ENCODE measurements at regions of chr18 and their contacts with region 1.

Region 1: DNA sequence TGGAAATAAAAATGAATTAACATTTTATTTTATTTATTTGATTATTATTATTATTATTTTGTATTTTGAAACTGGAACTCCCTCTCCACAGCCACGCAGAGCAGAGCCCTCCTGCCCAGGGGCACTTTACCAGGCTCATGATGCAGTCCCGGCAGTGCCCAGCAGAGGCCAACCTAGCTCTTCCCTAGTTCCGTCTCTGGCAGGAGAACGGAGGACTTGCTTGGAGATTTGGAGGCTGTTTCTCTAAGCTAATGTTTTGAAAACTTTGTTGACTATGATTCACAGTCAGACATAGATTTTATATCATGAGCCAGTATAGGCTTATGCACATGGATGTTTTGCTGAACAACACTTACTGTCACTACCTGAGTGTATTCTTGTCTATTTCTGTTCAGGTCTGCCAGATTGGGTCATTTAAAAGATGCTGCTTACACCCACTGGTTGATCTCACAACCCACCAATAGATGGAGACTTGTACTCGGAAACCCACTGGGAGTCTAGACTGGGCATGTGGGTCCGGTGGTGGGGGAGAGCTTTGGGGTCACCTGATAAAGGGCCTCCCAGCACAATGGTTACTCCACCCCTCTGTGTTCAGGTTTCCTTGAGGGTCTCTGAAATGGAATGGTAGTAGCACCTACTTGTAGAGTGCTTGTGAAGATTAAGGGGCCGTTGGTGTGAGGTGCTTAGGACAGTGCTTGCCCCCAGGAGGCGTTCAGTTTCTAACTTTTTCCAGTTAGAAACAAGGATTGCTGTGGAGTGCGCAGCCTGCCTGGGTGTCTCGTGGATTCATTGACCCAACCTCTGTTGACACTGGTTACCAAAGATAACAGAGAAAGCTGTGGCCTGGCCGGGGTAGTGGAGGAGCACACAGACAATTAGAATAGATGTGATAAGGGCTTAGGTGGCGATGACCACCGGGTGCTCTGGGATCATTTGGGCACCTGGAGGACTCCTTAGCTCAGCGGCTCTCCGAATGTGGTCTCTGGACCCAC is 177.3 kb downstream of the HAUS1 start:
- DNase-seq: peak; percentile 83
- H3K4me3 ChIP-seq: no peak overlapping the region
- H3K27ac ChIP-seq: no peak overlapping the region
- H3K4me1 ChIP-seq: peaks cover 28% of the 10 kb centered on the region
- H3K27me3 ChIP-seq: no peaks in the 10 kb centered on the region
- CTCF ChIP-seq: peak; percentile 92

Region 2: GRCh38 chr18:46622999-46623398 is 341.5 kb after region 1 on chr18:
- CTCF ChIA-PET with region 1: interaction called, 17 read pairs
- POLR2A ChIA-PET with region 1: no interaction called
- intact Hi-C with region 1: loop called (anchors 1 kb)
- DNase-seq: peak; percentile 60
- H3K4me3 ChIP-seq: no peak overlapping the region
- H3K27ac ChIP-seq: no peak overlapping the region
- H3K4me1 ChIP-seq: peaks cover 11% of the 10 kb centered on the region
- H3K27me3 ChIP-seq: no peaks in the 10 kb centered on the region
- CTCF ChIP-seq: peak; percentile 56

Measured in A673 (cell line).